ENCODE measurements at regions of chr19 and their contacts with region 1.

Region 1: DNA sequence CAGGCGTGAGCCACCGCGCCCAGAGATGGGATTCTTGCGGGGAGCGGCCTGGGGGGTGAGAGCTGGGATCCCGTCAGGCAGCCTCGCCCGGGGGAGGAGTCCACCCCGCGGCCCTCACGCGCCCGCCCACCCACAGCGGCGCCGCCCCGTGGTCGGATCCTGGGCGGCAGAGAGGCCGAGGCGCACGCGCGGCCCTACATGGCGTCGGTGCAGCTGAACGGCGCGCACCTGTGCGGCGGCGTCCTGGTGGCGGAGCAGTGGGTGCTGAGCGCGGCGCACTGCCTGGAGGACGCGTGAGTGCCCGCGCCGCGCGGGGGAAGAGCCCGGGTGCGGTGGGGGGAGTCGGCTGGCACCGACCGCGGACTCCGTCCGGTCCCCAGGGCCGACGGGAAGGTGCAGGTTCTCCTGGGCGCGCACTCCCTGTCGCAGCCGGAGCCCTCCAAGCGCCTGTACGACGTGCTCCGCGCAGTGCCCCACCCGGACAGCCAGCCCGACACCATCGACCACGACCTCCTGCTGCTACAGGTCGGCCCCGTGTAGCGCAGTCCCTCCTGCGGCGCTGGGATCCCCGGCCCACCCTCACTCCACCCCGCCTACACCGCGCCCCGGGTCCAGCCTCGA is 1.1 kb downstream of the CFD start:
- DNase-seq: peak; percentile 19 to 87 (median 56)
- ATAC-seq: peak; percentile 38
- H3K4me3 ChIP-seq: peak overlapping the region; percentile 20
- H3K4me3 Mint-ChIP-seq: peak overlapping the region; percentile 45
- H3K27ac ChIP-seq: no peak overlapping the region
- H3K27ac Mint-ChIP-seq: no peak overlapping the region
- H3K4me1 ChIP-seq: peaks cover 49% of the 10 kb centered on the region
- H3K4me1 Mint-ChIP-seq: peaks cover 23% of the 10 kb centered on the region
- H3K27me3 ChIP-seq: peaks cover 9 to 16% of the 10 kb centered on the region in 2 experiments
- H3K27me3 Mint-ChIP-seq: peaks cover 7% of the 10 kb centered on the region
- CTCF ChIP-seq: no peak

Region 2: DNA sequence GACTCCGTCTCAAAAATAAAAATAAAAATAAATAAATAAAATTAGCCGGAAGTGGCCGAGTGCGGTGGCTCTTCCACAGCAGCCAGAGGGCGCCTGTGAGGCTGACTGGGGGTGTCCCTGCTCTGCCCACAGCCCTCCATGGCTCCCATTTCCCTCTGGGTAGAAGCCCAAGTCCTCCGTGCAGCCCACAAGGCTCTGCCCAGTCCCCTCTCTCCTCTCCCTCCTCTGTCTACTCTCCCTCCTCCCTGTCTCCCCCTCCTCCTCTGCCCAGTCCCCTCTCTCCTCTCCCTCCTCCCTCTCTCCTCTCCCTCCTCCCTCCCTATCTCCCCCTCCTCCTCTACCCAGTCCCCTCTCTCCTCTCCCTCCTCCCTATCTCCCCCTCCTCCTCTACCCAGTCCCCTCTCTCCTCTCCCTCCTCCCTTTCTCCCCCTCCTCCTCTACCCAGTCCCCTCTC is 89.2 kb before region 1 on chr19:
- CTCF ChIA-PET with region 1: interaction called, 5 read pairs
- POLR2A ChIA-PET with region 1: no interaction called
- intact Hi-C with region 1: loop called (anchors 1 to 5 kb)
- DNase-seq: peak in 5 of 14 experiments; percentile 13 to 69 (median 31)
- ATAC-seq: peak; percentile 56
- H3K4me3 ChIP-seq: no peak overlapping the region
- H3K4me3 Mint-ChIP-seq: no peak overlapping the region
- H3K27ac ChIP-seq: no peak overlapping the region
- H3K27ac Mint-ChIP-seq: no peak overlapping the region
- H3K4me1 ChIP-seq: no peaks in the 10 kb centered on the region
- H3K4me1 Mint-ChIP-seq: peaks cover 4% of the 10 kb centered on the region
- H3K27me3 ChIP-seq: no peaks in the 10 kb centered on the region
- H3K27me3 Mint-ChIP-seq: peaks cover 9% of the 10 kb centered on the region
- CTCF ChIP-seq: no peak

Region 3: GRCh38 chr19:892243-893050 is 31.9 kb after region 1 on chr19:
- CTCF ChIA-PET with region 1: interaction called, 10 read pairs
- POLR2A ChIA-PET with region 1: interaction called, 29 read pairs
- intact Hi-C with region 1: loop called (anchors 2 kb)
- DNase-seq: peak in 2 of 14 experiments; percentile 33 to 52
- ATAC-seq: peak; percentile 44
- H3K4me3 ChIP-seq: peak overlapping the region; percentile 69
- H3K4me3 Mint-ChIP-seq: peak overlapping the region; percentile 93
- H3K27ac ChIP-seq: peak overlapping the region; percentile 58 to 92
- H3K27ac Mint-ChIP-seq: peak overlapping the region; percentile 98
- H3K4me1 ChIP-seq: peaks cover 25% of the 10 kb centered on the region
- H3K4me1 Mint-ChIP-seq: peaks cover 25% of the 10 kb centered on the region
- H3K27me3 ChIP-seq: no peaks in the 10 kb centered on the region
- H3K27me3 Mint-ChIP-seq: peaks cover 3% of the 10 kb centered on the region
- CTCF ChIP-seq: no peak

Region 4: GRCh38 chr19:913080-913748 is 52.6 kb after region 1 on chr19 and contains the start of gene R3HDM4:
- CTCF ChIA-PET with region 1: interaction called, 52 read pairs
- POLR2A ChIA-PET with region 1: interaction called, 40 read pairs
- intact Hi-C with region 1: no loop called
- DNase-seq: peak; percentile 73 to 93 (median 84)
- ATAC-seq: peak; percentile 37
- H3K4me3 ChIP-seq: peak within 1 kb of the TSS; percentile 95
- H3K4me3 Mint-ChIP-seq: peak within 1 kb of the TSS; percentile 91
- H3K27ac ChIP-seq: peak within 1 kb of the TSS; percentile 98
- H3K27ac Mint-ChIP-seq: peak within 1 kb of the TSS; percentile 94
- H3K4me1 ChIP-seq: peaks cover 70% of the 10 kb centered on the region
- H3K4me1 Mint-ChIP-seq: peaks cover 28% of the 10 kb centered on the region
- H3K27me3 ChIP-seq: peaks cover 8 to 14% of the 10 kb centered on the region in 2 experiments
- H3K27me3 Mint-ChIP-seq: peaks cover 3% of the 10 kb centered on the region
- CTCF ChIP-seq: no peak
- total RNA-seq, gene R3HDM4: 309 to 313 TPM

Region 5: DNA sequence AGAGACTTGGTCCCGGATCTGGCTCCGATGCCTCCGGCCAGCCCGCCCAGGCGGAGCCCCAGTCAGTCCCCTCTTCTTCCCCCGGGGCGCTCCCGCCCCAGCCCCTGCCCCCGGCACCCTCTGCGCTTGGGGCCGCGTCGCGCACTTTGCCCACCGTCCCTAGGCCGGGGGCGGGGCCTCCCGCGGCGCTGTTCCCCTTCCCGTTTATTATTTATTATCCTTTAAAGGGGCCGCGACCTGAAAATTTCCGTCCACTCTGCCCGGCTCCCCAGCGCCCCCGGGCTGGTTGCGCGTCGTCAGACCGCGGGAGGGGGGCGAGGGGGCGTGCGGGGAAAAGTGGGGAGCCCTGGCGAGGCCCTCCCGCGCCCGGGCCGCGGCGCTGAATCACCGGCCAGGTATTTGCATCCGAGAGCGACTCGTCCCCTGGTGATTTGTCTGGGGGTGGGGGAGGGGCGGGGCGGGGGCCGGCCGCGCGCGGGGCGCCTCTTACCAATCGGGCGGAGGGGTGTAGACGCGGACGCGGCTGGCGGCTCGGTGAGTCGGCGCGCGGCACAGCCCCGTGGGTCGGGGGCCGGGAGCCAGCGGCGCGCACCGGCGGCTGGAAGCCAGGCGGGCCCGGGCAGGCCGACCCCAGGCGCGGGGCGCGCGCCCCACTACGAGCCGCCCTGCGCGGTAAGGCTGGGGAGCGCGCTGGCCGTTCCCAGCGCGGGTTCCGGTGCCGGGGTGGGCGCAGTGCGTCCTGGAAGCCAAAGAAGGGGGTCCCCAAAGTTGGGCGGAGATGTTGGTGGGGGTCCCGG is 65.1 kb after region 1 on chr19 and contains the start of gene ARID3A:
- CTCF ChIA-PET with region 1: interaction called, 52 read pairs
- POLR2A ChIA-PET with region 1: interaction called, 40 read pairs
- intact Hi-C with region 1: loop called (anchors 1 kb)
- DNase-seq: peak; percentile 55 to 87 (median 72)
- ATAC-seq: peak; percentile 66
- H3K4me3 ChIP-seq: peak within 1 kb of the TSS; percentile 83
- H3K4me3 Mint-ChIP-seq: peak within 1 kb of the TSS; percentile 86
- H3K27ac ChIP-seq: peak within 1 kb of the TSS in 1 of 2 donors; percentile 60
- H3K27ac Mint-ChIP-seq: peak within 1 kb of the TSS; percentile 36
- H3K4me1 ChIP-seq: peaks cover 44% of the 10 kb centered on the region
- H3K4me1 Mint-ChIP-seq: peaks cover 15% of the 10 kb centered on the region
- H3K27me3 ChIP-seq: no peaks in the 10 kb centered on the region
- H3K27me3 Mint-ChIP-seq: no peaks in the 10 kb centered on the region
- CTCF ChIP-seq: no peak
- total RNA-seq, gene ARID3A: 3.7 to 4.1 TPM

Region 6: GRCh38 chr19:1001538-1002166 is 141.1 kb after region 1 on chr19:
- CTCF ChIA-PET with region 1: interaction called, 4 read pairs
- POLR2A ChIA-PET with region 1: interaction called, 3 read pairs
- intact Hi-C with region 1: loop called in 1 of 2 experiments (anchors 1 kb)
- DNase-seq: peak in 13 of 14 experiments; percentile 62 to 82 (median 71)
- ATAC-seq: peak; percentile 82
- H3K4me3 ChIP-seq: no peak overlapping the region
- H3K4me3 Mint-ChIP-seq: no peak overlapping the region
- H3K27ac ChIP-seq: no peak overlapping the region
- H3K27ac Mint-ChIP-seq: no peak overlapping the region
- H3K4me1 ChIP-seq: peaks cover 23% of the 10 kb centered on the region
- H3K4me1 Mint-ChIP-seq: peaks cover 7% of the 10 kb centered on the region
- H3K27me3 ChIP-seq: peaks cover 30 to 40% of the 10 kb centered on the region in 2 experiments
- H3K27me3 Mint-ChIP-seq: peaks cover 26% of the 10 kb centered on the region
- CTCF ChIP-seq: peak; percentile 91

Region 7: DNA sequence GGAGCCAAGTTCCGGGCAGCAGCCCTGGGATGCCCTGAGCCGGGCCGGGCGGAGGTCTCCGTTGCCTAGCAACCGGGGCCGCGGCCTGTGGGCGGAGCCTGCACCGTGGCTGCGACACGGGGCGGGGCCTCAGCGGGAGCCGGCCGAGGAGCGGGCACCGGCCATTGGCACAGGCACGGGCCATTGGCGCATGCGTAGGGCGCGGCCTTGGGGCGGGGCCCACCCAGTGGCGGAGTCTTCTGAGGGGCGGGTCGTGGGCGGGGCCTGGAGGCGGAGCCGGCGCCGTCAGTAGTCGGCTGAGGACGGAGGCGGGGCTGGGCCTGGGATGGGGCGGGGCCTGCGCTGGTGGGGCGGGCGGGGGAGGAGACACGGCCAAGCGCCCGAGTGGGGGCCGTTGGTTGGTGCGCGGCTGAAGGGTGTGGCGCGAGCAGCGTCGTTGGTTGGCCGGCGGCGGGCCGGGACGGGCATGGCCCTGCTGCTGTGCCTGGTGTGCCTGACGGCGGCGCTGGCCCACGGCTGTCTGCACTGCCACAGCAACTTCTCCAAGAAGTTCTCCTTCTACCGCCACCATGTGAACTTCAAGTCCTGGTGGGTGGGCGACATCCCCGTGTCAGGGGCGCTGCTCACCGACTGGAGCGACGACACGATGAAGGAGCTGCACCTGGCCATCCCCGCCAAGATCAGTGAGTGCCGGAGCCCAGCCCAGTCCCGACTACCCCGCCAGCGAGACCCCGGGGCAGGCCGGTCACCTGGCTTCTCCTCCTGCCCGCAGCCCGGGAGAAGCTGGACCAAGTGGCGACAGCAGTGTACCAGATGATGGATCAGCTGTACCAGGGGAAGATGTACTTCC is 1236.1 kb after region 1 on chr19 and contains the start of gene IZUMO4:
- CTCF ChIA-PET with region 1: no interaction called
- POLR2A ChIA-PET with region 1: no interaction called
- intact Hi-C with region 1: no loop called
- DNase-seq: peak; percentile 99 to 100 (median 100)
- ATAC-seq: peak; percentile 79
- H3K4me3 ChIP-seq: peak within 1 kb of the TSS; percentile 93
- H3K4me3 Mint-ChIP-seq: peak within 1 kb of the TSS; percentile 97
- H3K27ac ChIP-seq: peak within 1 kb of the TSS; percentile 75 to 79
- H3K27ac Mint-ChIP-seq: peak within 1 kb of the TSS; percentile 96
- H3K4me1 ChIP-seq: peaks cover 54% of the 10 kb centered on the region
- H3K4me1 Mint-ChIP-seq: peaks cover 25% of the 10 kb centered on the region
- H3K27me3 ChIP-seq: no peaks in the 10 kb centered on the region
- H3K27me3 Mint-ChIP-seq: no peaks in the 10 kb centered on the region
- CTCF ChIP-seq: peak; percentile 38
- total RNA-seq, gene IZUMO4: 17.4 to 17.9 TPM